ENCODE measurements at regions of chr11 and their contacts with region 1.

Region 1: DNA sequence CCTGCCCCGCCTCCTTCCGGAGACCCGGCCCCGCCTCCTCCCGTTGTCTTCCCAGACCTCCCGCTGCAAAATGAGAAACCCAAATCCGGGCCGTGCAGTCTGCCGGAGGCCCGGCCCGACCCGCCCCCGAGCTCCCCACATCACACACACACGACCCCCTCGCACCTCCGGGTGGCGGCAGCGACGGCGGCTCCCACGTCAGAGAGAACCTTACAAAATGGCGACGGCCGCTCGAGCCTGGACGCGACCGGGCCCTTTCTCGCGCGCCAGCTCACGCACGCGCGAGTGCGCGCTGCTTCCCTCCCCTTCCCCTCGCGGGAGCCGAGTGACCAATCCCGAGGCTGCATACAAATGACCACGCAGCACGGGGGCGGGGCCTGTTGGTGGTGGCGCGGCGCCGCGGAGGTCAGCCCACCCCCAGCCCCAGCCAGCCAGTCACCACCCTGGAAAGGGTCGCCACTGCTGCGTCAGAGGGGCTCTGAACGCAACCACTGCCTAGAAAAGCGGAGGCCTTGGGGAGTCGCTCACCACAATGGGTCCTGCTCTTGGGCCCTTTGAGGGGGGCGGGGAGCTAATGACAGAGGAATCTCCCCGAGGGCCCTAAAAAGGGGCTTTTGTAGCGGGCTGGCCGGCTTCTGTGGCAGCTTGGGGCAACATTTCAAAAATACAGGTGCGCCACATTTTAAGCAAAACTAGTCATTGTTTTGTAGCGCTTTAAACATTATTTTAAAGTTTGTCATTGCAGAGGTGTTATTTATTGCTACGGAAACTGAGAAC is at the start of gene RBM4B:
- DNase-seq: peak; percentile 84
- ATAC-seq: peak; percentile 96
- H3K4me3 ChIP-seq: peak within 1 kb of the TSS; percentile 75
- H3K27ac ChIP-seq: peak within 1 kb of the TSS; percentile 89
- H3K4me1 ChIP-seq: peaks cover 9% of the 10 kb centered on the region
- H3K27me3 ChIP-seq: no peaks in the 10 kb centered on the region
- CTCF ChIP-seq: no peak
- EP300 ChIP-seq: no peak
- POLR2A ChIP-seq: peak; percentile 92
- RAD21 ChIP-seq: 0 out of 2 replicates have a peak, but pooled peaks have one; percentile 2
- polyA plus RNA-seq, gene RBM4B: 17.2 to 23.8 TPM

Region 2: DNA sequence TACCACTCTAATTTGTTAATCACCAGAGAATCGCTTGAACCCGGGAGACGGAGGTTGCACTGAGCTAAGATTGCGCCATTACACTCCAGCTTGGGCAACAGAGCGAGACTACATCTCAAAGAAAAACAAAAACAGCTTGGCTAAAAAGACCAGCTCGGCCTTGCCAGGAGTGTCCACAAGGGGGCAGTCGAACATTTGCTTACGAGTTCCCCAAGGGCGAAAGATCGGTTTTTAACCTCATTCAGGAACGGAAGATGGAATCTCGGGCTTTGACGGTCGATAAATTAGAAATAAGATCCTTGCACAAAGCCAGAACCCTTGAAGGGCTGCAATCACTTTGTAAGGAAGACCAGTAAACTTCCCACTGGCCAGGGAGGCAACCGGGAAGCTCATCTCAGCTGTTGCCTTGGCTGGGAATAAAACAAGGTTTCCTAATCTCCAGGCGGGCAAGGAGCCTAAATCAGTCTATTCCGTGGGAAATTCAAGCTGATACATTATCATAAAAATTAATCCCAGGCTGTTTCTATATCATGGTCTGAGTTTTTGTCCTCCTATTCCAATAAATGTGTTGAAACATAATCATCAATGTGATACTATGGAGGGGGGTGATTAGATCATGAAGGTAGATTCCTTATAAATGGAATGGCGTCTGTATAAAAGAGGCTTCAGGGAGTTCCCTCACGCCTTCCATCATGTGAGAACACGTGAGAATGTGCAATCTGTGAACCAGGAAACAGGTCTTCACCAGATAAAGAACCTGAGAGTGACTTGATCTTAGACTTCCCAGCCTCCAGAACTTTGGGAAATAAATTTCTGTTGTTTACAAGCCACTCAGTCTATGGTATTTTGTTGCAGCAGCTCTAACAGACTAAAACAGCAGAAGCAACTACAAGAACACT is 291.4 kb before region 1 on chr11:
- CTCF ChIA-PET with region 1: interaction called, 14 read pairs
- POLR2A ChIA-PET with region 1: interaction called, 3 read pairs
- RAD21 ChIA-PET with region 1: interaction called, 6 read pairs
- SMC1A ChIA-PET with region 1: interaction called, 3 read pairs
- in situ Hi-C with region 1: no loop called
- intact Hi-C with region 1: no loop called
- DNase-seq: peak; percentile 41
- ATAC-seq: peak; percentile 93
- H3K4me3 ChIP-seq: no peak overlapping the region
- H3K27ac ChIP-seq: no peak overlapping the region
- H3K4me1 ChIP-seq: peaks cover 2% of the 10 kb centered on the region; the same call in 1 of the 2 replicates
- H3K27me3 ChIP-seq: no peaks in the 10 kb centered on the region
- CTCF ChIP-seq: peak; percentile 84 to 98 (median 94)
- EP300 ChIP-seq: no peak
- POLR2A ChIP-seq: no peak
- RAD21 ChIP-seq: peak; percentile 62

Region 3: GRCh38 chr11:66421492-66422205 is 256.1 kb before region 1 on chr11:
- CTCF ChIA-PET with region 1: interaction called, 13 read pairs
- POLR2A ChIA-PET with region 1: no interaction called
- RAD21 ChIA-PET with region 1: interaction called, 9 read pairs
- SMC1A ChIA-PET with region 1: interaction called, 4 read pairs
- in situ Hi-C with region 1: no loop called
- intact Hi-C with region 1: no loop called
- DNase-seq: peak; percentile 37
- ATAC-seq: peak; percentile 57
- H3K4me3 ChIP-seq: no peak overlapping the region
- H3K27ac ChIP-seq: no peak overlapping the region
- H3K4me1 ChIP-seq: peaks cover 3% of the 10 kb centered on the region; the same call in 1 of the 2 replicates
- H3K27me3 ChIP-seq: peaks cover 0 to 8% of the 10 kb centered on the region in 2 experiments; a peak in 1 of 4 replicates
- CTCF ChIP-seq: no peak
- EP300 ChIP-seq: no peak
- POLR2A ChIP-seq: no peak
- RAD21 ChIP-seq: no peak

Region 4: DNA sequence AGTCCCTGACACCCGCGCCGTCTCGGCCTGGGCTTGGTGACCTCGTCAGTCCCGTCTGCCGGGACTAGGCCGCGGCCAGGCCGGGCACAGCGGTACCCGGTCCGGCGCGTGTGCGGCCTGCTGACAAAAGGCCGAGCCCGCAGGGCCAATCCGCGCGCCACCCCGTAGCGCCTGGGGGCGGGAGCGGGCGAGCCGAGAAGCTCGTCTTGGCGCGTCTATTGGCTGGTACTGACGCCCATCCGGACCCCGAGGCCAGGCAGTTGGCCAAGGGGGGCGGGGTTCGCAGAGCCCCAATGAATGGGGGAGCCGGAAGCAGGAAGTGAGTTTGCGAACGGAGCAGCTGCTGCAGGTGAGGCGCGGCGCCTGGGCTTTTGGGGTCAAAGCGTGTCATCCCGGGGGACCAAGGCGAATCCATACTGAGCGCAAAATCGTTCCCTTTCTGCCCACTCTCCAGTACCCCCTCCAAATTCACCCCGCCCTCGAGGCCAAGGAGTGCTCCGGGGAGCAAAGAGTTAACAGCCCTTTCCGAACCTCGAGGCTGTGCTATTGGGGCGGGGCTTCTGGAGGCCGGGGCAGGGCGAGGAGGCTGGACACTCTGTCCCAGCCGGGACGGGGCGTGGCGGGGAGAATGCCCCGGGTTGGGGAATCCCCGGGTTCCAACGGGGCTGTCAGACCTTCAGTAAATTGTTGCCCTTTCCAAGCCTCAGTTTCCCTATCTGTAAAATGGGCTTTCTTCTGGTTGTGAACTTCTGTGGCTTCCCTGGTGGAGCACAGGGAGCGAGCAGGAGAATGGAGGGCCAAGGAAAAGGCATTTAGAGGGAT is 197.5 kb before region 1 on chr11 and contains the start of gene DPP3:
- CTCF ChIA-PET with region 1: interaction called, 31 read pairs
- POLR2A ChIA-PET with region 1: interaction called, 7 read pairs
- RAD21 ChIA-PET with region 1: interaction called, 20 read pairs
- SMC1A ChIA-PET with region 1: interaction called, 10 read pairs
- in situ Hi-C with region 1: no loop called
- intact Hi-C with region 1: loop called (anchors 2 kb)
- DNase-seq: peak; percentile 84
- ATAC-seq: peak; percentile 98
- H3K4me3 ChIP-seq: peak within 1 kb of the TSS; percentile 95
- H3K27ac ChIP-seq: peak within 1 kb of the TSS; percentile 89
- H3K4me1 ChIP-seq: peaks cover 6% of the 10 kb centered on the region
- H3K27me3 ChIP-seq: no peaks in the 10 kb centered on the region
- CTCF ChIP-seq: no peak
- EP300 ChIP-seq: peak in 1 of 2 experiments; percentile 40; a peak in 1 of 4 replicates
- POLR2A ChIP-seq: peak; percentile 94
- RAD21 ChIP-seq: no peak
- polyA plus RNA-seq, gene DPP3: 6.0 to 6.3 TPM

Region 5: GRCh38 chr11:66568124-66568916 is 109.5 kb before region 1 on chr11 and contains the start of gene CTSF:
- CTCF ChIA-PET with region 1: interaction called, 10 read pairs
- POLR2A ChIA-PET with region 1: interaction called, 3 read pairs
- RAD21 ChIA-PET with region 1: interaction called, 10 read pairs
- SMC1A ChIA-PET with region 1: interaction called, 5 read pairs
- in situ Hi-C with region 1: no loop called
- intact Hi-C with region 1: no loop called
- DNase-seq: no peak
- ATAC-seq: peak; percentile 79
- H3K4me3 ChIP-seq: peak within 1 kb of the TSS; percentile 60; the same call in 1 of the 2 replicates
- H3K27ac ChIP-seq: no peak within 1 kb of the TSS
- H3K4me1 ChIP-seq: no peaks in the 10 kb centered on the region
- H3K27me3 ChIP-seq: peaks cover 0 to 6% of the 10 kb centered on the region in 2 experiments; a peak in 3 of 4 replicates
- CTCF ChIP-seq: no peak
- EP300 ChIP-seq: no peak
- POLR2A ChIP-seq: no peak
- RAD21 ChIP-seq: no peak
- polyA plus RNA-seq, gene CTSF: not detected

Region 6: GRCh38 chr11:66592457-66593302 is 85.1 kb before region 1 on chr11 and contains the starts of genes CCDC87 and CCS:
- CTCF ChIA-PET with region 1: interaction called, 75 read pairs
- POLR2A ChIA-PET with region 1: interaction called, 26 read pairs
- RAD21 ChIA-PET with region 1: interaction called, 27 read pairs
- SMC1A ChIA-PET with region 1: interaction called, 19 read pairs
- in situ Hi-C with region 1: no loop called
- intact Hi-C with region 1: loop called (anchors 5 kb)
- DNase-seq: peak; percentile 84
- ATAC-seq: peak; percentile 98
- H3K4me3 ChIP-seq: peak within 1 kb of the TSS; percentile 85
- H3K27ac ChIP-seq: peak within 1 kb of the TSS; percentile 62
- H3K4me1 ChIP-seq: peaks cover 13% of the 10 kb centered on the region
- H3K27me3 ChIP-seq: no peaks in the 10 kb centered on the region
- CTCF ChIP-seq: peak; percentile 55 to 68 (median 56)
- EP300 ChIP-seq: no peak
- POLR2A ChIP-seq: peak; percentile 100
- RAD21 ChIP-seq: no peak
- polyA plus RNA-seq, gene CCDC87: 0.02 TPM in 1 of 2 experiments, not detected in the other
- polyA plus RNA-seq, gene CCS: 1.5 to 7.6 TPM

Region 7: GRCh38 chr11:66638177-66639065 is 39.4 kb before region 1 on chr11 and contains the start of gene RBM4:
- CTCF ChIA-PET with region 1: interaction called, 19 read pairs
- POLR2A ChIA-PET with region 1: interaction called, 22 read pairs
- RAD21 ChIA-PET with region 1: interaction called, 36 read pairs
- SMC1A ChIA-PET with region 1: interaction called, 10 read pairs
- in situ Hi-C with region 1: no loop called
- intact Hi-C with region 1: no loop called
- DNase-seq: peak; percentile 98
- ATAC-seq: peak; percentile 98
- H3K4me3 ChIP-seq: peak within 1 kb of the TSS; percentile 90
- H3K27ac ChIP-seq: peak within 1 kb of the TSS; percentile 92
- H3K4me1 ChIP-seq: peaks cover 17% of the 10 kb centered on the region
- H3K27me3 ChIP-seq: no peaks in the 10 kb centered on the region
- CTCF ChIP-seq: peak in 2 of 3 experiments; percentile 4 to 10; a peak in 1 of 6 replicates
- EP300 ChIP-seq: no peak
- POLR2A ChIP-seq: peak; percentile 93
- RAD21 ChIP-seq: no peak
- polyA plus RNA-seq, gene RBM4: 163 to 224 TPM

Measured in GM12878 (cell line).